ENCODE measurements at regions of chr19 and their contacts with region 1.

Region 1: DNA sequence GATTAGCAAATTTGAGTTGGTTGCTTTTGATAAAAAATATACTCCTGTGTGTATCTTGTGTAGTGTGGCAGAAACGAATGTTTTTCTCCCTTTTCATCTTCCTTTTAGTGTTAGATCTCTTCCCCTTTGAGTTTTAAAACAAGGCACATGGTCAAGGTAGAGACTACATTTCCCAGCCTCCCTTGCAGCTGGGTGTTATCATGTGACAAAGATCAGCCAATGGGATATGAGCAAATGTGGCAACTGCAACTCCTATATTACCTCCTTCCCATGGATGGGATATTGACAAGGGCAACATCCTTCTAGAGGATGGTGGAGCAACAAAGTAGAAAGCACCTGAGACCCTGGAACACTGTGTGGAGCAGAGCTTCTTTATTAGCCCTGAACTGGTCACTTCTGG is 42.4 kb downstream of the ADGRE3 start:
- DNase-seq: peak; percentile 81
- H3K27ac ChIP-seq: no peak overlapping the region
- CTCF ChIP-seq: no peak

Region 2: GRCh38 chr19:15022752-15023151 is 390.5 kb after region 1 on chr19:
- CTCF ChIA-PET with region 1: no interaction called
- POLR2A ChIA-PET with region 1: interaction called, 13 read pairs
- DNase-seq: no peak
- H3K27ac ChIP-seq: no peak overlapping the region
- CTCF ChIP-seq: no peak

Measured in RWPE1 (cell line).